ENCODE measurements at regions of chr14 and their contacts with region 1.

Region 1: GRCh38 chr14:93959239-93960107 is 16.9 kb downstream of the ASB2 start:
- DNase-seq: peak; percentile 59 to 93 (median 76)
- ATAC-seq: peak; percentile 87
- H3K4me3 ChIP-seq: peak overlapping the region; percentile 23
- H3K4me3 Mint-ChIP-seq: peak overlapping the region; percentile 57 to 87 (median 72)
- H3K27ac ChIP-seq: no peak overlapping the region
- H3K27ac Mint-ChIP-seq: peak overlapping the region; percentile 49 to 100 (median 85)
- H3K4me1 ChIP-seq: peaks cover 74 to 99% of the 10 kb centered on the region in 2 donors
- H3K4me1 Mint-ChIP-seq: peaks cover 63 to 96% (median 87%) of the 10 kb centered on the region in 7 donors
- H3K27me3 ChIP-seq: no peaks in the 10 kb centered on the region
- H3K27me3 Mint-ChIP-seq: no peaks in the 10 kb centered on the region

Region 2: DNA sequence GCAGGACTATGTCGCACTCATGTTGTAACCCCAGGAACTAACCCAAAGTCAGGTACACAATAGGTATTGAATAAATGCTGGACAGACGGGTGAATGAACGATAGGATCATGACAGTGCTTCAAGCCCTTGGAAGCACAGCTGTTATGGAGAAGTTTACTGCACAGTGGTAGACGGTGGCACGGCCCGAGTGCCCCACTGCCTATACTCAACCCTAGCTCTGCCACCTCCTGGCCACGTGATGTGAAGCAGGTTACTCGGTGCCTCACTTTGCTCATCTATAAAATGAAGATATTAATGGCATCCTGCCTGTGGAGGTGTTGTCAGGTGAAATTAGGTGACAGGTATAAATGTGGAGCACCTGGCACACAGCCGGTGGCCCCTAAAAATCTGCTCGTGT is 11.1 kb after region 1 on chr14:
- CTCF ChIA-PET with region 1: interaction called, 27 read pairs
- POLR2A ChIA-PET with region 1: interaction called, 32 read pairs
- intact Hi-C with region 1: loop called (anchors 1 kb)
- DNase-seq: peak in 8 of 9 donors; percentile 43 to 63 (median 56)
- ATAC-seq: peak; percentile 93
- H3K4me3 ChIP-seq: peak overlapping the region; percentile 72
- H3K4me3 Mint-ChIP-seq: peak overlapping the region; percentile 82 to 93 (median 89)
- H3K27ac ChIP-seq: no peak overlapping the region
- H3K27ac Mint-ChIP-seq: peak overlapping the region in 8 of 9 donors; percentile 21 to 99 (median 70)
- H3K4me1 ChIP-seq: peaks cover 13 to 24% of the 10 kb centered on the region in 2 donors
- H3K4me1 Mint-ChIP-seq: peaks cover 14 to 91% (median 19%) of the 10 kb centered on the region in 7 donors
- H3K27me3 ChIP-seq: no peaks in the 10 kb centered on the region
- H3K27me3 Mint-ChIP-seq: peaks cover 0 to 2% (median under 1%) of the 10 kb centered on the region in 5 donors

Region 3: DNA sequence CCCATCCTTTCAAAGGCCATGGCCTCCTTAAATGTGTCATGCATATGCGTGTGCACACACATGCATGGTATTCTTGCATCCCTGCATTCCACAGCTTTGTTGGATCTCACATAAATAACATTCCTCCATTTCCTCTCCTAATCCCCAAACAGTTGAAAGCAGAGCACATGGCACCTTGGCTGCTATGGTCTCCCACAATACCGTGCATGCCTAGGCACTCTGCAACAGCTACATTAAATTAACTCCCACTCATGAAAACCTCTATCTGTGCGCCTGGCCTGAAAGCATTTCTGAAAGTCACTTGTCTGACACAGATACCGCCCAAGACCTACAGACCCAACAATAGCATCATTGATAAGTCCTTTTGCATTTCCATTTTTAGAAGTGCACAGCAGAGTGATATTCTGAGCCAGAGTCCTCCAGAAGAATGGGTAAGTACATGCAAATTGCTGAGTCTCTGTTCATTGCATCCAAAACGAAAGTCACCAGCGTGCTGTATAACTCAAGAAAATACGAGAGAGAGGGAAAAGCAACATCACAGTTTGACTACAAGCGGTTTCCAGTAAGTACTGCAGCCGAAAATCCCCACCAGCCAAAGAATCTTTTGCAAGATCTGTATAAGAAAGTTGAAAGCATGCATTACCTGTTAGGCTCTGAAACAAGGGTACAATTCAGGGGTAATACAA is 16.5 kb after region 1 on chr14:
- CTCF ChIA-PET with region 1: interaction called, 27 read pairs
- POLR2A ChIA-PET with region 1: interaction called, 32 read pairs
- intact Hi-C with region 1: loop called (anchors 1 kb)
- DNase-seq: no peak
- ATAC-seq: no peak
- H3K4me3 ChIP-seq: peak overlapping the region; percentile 9
- H3K4me3 Mint-ChIP-seq: peak overlapping the region in 9 of 10 donors; percentile 18 to 92 (median 59)
- H3K27ac ChIP-seq: no peak overlapping the region
- H3K27ac Mint-ChIP-seq: peak overlapping the region in 3 of 9 donors; percentile 12 to 97 (median 28)
- H3K4me1 ChIP-seq: peaks cover 41 to 46% of the 10 kb centered on the region in 2 donors
- H3K4me1 Mint-ChIP-seq: peaks cover 39 to 94% (median 62%) of the 10 kb centered on the region in 7 donors
- H3K27me3 ChIP-seq: no peaks in the 10 kb centered on the region
- H3K27me3 Mint-ChIP-seq: peaks cover 0 to 6% (median 6%) of the 10 kb centered on the region in 5 donors

Region 4: GRCh38 chr14:93984987-93985410 is 25.5 kb after region 1 on chr14:
- CTCF ChIA-PET with region 1: no interaction called
- POLR2A ChIA-PET with region 1: interaction called, 32 read pairs
- intact Hi-C with region 1: no loop called
- DNase-seq: no peak
- ATAC-seq: no peak
- H3K4me3 ChIP-seq: no peak overlapping the region
- H3K4me3 Mint-ChIP-seq: no peak overlapping the region
- H3K27ac ChIP-seq: no peak overlapping the region
- H3K27ac Mint-ChIP-seq: no peak overlapping the region
- H3K4me1 ChIP-seq: peaks cover 0 to 2% of the 10 kb centered on the region in 2 donors
- H3K4me1 Mint-ChIP-seq: peaks cover 4 to 24% (median 18%) of the 10 kb centered on the region in 7 donors
- H3K27me3 ChIP-seq: no peaks in the 10 kb centered on the region
- H3K27me3 Mint-ChIP-seq: peaks cover 0 to 3% (median 0%) of the 10 kb centered on the region in 5 donors

Region 5: DNA sequence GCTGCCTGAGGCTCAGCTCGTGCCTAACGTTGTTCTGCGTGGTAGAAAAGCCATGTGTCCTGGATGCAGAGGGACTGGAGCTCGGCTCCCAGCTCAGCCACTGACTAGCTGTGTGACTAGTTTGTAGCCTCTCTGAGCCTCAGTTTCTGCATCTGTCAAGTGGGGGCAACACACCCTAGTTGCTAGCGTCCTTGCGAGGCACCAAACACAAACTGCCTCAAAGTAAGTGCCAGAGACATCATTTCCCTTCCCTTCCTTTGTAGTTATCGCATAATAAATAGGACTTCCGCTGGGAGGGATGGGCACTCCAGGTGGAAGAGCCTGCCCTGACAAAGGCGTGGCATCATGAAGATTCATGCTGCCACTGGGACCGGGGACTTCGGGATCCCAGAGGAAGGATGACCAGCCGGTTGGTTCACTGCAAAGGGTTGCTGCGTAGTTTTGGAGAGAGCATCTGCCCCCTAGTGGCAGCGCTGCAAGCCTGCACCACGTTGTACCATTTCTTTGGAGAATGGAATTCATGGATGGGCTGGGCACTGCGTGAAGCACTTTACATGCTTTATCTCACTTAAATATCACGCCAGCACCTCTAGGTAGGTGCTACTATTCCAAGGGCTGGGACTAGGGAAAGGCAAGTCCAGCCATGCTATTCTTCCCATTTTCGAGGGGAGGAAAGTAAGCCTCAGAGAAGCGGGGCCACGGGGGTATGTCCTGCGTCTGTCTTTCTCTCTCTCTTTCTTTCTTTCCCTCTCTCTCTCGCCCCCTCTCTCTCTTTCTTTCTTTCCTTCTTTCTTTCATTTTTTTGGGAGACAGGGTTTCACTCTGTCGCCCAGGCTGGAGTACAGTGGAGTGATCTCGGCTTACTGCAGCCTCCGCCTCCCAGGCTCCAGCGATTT is 42.3 kb after region 1 on chr14:
- CTCF ChIA-PET with region 1: interaction called, 7 read pairs
- POLR2A ChIA-PET with region 1: no interaction called
- intact Hi-C with region 1: loop called in 1 of 2 experiments (anchors 5 kb)
- DNase-seq: peak; percentile 28 to 63 (median 51)
- ATAC-seq: peak; percentile 85
- H3K4me3 ChIP-seq: no peak overlapping the region
- H3K4me3 Mint-ChIP-seq: peak overlapping the region in 9 of 10 donors; percentile 23 to 57 (median 53)
- H3K27ac ChIP-seq: no peak overlapping the region
- H3K27ac Mint-ChIP-seq: peak overlapping the region in 2 of 9 donors; percentile 38 to 78
- H3K4me1 ChIP-seq: peaks cover 4 to 6% of the 10 kb centered on the region in 2 donors
- H3K4me1 Mint-ChIP-seq: peaks cover 2 to 45% (median 10%) of the 10 kb centered on the region in 7 donors
- H3K27me3 ChIP-seq: no peaks in the 10 kb centered on the region
- H3K27me3 Mint-ChIP-seq: peaks cover 6 to 19% (median 8%) of the 10 kb centered on the region in 5 donors

Region 6: GRCh38 chr14:94026173-94026888 is 66.9 kb after region 1 on chr14 and contains the start of gene OTUB2:
- CTCF ChIA-PET with region 1: no interaction called
- POLR2A ChIA-PET with region 1: no interaction called
- intact Hi-C with region 1: loop called in 1 of 2 experiments (anchors 1 kb)
- DNase-seq: peak; percentile 89 to 98 (median 96)
- ATAC-seq: peak; percentile 100
- H3K4me3 ChIP-seq: peak within 1 kb of the TSS; percentile 51
- H3K4me3 Mint-ChIP-seq: peak within 1 kb of the TSS; percentile 72 to 90 (median 82)
- H3K27ac ChIP-seq: no peak within 1 kb of the TSS
- H3K27ac Mint-ChIP-seq: peak within 1 kb of the TSS in 7 of 9 donors; percentile 20 to 75 (median 66)
- H3K4me1 ChIP-seq: peaks cover 5 to 12% of the 10 kb centered on the region in 2 donors
- H3K4me1 Mint-ChIP-seq: peaks cover 14 to 43% (median 18%) of the 10 kb centered on the region in 7 donors
- H3K27me3 ChIP-seq: no peaks in the 10 kb centered on the region
- H3K27me3 Mint-ChIP-seq: peaks cover 0 to 2% (median 0%) of the 10 kb centered on the region in 5 donors
- total RNA-seq, gene OTUB2: 0.11 to 2.5 (median 0.63) TPM in 4 of 5 experiments, not detected in the other

Measured in naive thymus-derived CD4-positive, alpha-beta T cell (primary cell).